CD4-positive, alpha-beta T cell (primary cell): ENCODE measurements at regions of chr2 and their contacts with region 1.

Region 1: GRCh38 chr2:156332534-156333273 is at the start of gene NR4A2:
- DNase-seq: peak; percentile 75 to 98 (median 86)
- ATAC-seq: peak; percentile 54
- H3K4me3 ChIP-seq: peak within 1 kb of the TSS; percentile 76
- H3K4me3 Mint-ChIP-seq: peak within 1 kb of the TSS; percentile 95
- H3K27ac ChIP-seq: peak within 1 kb of the TSS; percentile 93 to 98
- H3K27ac Mint-ChIP-seq: peak within 1 kb of the TSS; percentile 100
- H3K4me1 ChIP-seq: peaks cover 47% of the 10 kb centered on the region
- H3K4me1 Mint-ChIP-seq: peaks cover 57% of the 10 kb centered on the region
- H3K27me3 ChIP-seq: peaks cover 0 to 16% of the 10 kb centered on the region in 2 experiments
- H3K27me3 Mint-ChIP-seq: peaks cover 41% of the 10 kb centered on the region
- CTCF ChIP-seq: no peak
- total RNA-seq, gene NR4A2: 290 to 319 TPM

Region 2: GRCh38 chr2:156400706-156401678 is 68.3 kb after region 1 on chr2:
- CTCF ChIA-PET with region 1: interaction called, 18 read pairs
- POLR2A ChIA-PET with region 1: interaction called, 69 read pairs
- intact Hi-C with region 1: loop called in 1 of 2 experiments (anchors 1 kb)
- DNase-seq: peak; percentile 67 to 93 (median 77)
- ATAC-seq: peak; percentile 81
- H3K4me3 ChIP-seq: peak overlapping the region; percentile 88
- H3K4me3 Mint-ChIP-seq: peak overlapping the region; percentile 92
- H3K27ac ChIP-seq: peak overlapping the region; percentile 87 to 90
- H3K27ac Mint-ChIP-seq: peak overlapping the region; percentile 99
- H3K4me1 ChIP-seq: peaks cover 18% of the 10 kb centered on the region
- H3K4me1 Mint-ChIP-seq: peaks cover 28% of the 10 kb centered on the region
- H3K27me3 ChIP-seq: no peaks in the 10 kb centered on the region
- H3K27me3 Mint-ChIP-seq: peaks cover 11% of the 10 kb centered on the region
- CTCF ChIP-seq: no peak

Region 3: GRCh38 chr2:156435715-156436496 is 103.2 kb after region 1 on chr2 and contains the start of gene GPD2:
- CTCF ChIA-PET with region 1: interaction called, 7 read pairs
- POLR2A ChIA-PET with region 1: interaction called, 31 read pairs
- intact Hi-C with region 1: loop called in 1 of 2 experiments (anchors 5 kb)
- DNase-seq: peak; percentile 25 to 77 (median 46)
- ATAC-seq: peak; percentile 63
- H3K4me3 ChIP-seq: peak within 1 kb of the TSS; percentile 80
- H3K4me3 Mint-ChIP-seq: peak within 1 kb of the TSS; percentile 96
- H3K27ac ChIP-seq: peak within 1 kb of the TSS; percentile 33 to 69
- H3K27ac Mint-ChIP-seq: peak within 1 kb of the TSS; percentile 95
- H3K4me1 ChIP-seq: peaks cover 28% of the 10 kb centered on the region
- H3K4me1 Mint-ChIP-seq: peaks cover 33% of the 10 kb centered on the region
- H3K27me3 ChIP-seq: no peaks in the 10 kb centered on the region
- H3K27me3 Mint-ChIP-seq: no peaks in the 10 kb centered on the region
- CTCF ChIP-seq: no peak
- total RNA-seq, gene GPD2: 6.2 to 6.7 TPM

Region 4: DNA sequence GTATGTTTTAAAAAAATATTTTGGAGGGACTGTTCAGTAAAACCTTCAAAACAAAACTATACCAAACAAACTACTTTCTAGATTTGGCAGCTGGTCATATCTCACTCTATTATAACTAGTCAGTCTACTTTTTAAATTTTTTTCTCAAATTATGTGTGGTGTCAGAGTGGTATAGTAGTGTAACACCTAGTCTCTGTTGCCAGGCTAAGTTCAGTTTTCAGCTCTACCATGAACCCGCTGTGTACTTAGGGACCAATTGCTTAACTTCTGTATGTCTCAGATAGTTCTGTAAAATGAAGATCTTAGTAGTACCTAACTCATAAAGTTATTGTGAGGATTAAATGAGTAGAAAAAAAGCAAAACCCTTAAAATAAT is 157.7 kb after region 1 on chr2:
- CTCF ChIA-PET with region 1: no interaction called
- POLR2A ChIA-PET with region 1: interaction called, 4 read pairs
- intact Hi-C with region 1: loop called in 1 of 2 experiments (anchors 10 kb)
- DNase-seq: no peak
- ATAC-seq: no peak
- H3K4me3 ChIP-seq: no peak overlapping the region
- H3K4me3 Mint-ChIP-seq: no peak overlapping the region
- H3K27ac ChIP-seq: no peak overlapping the region
- H3K27ac Mint-ChIP-seq: no peak overlapping the region
- H3K4me1 ChIP-seq: no peaks in the 10 kb centered on the region
- H3K4me1 Mint-ChIP-seq: peaks cover 39% of the 10 kb centered on the region
- H3K27me3 ChIP-seq: no peaks in the 10 kb centered on the region
- H3K27me3 Mint-ChIP-seq: no peaks in the 10 kb centered on the region
- CTCF ChIP-seq: no peak

Region 5: GRCh38 chr2:156589381-156590079 is 256.8 kb after region 1 on chr2:
- CTCF ChIA-PET with region 1: interaction called, 7 read pairs
- POLR2A ChIA-PET with region 1: interaction called, 11 read pairs
- intact Hi-C with region 1: loop called (anchors 1 to 5 kb)
- DNase-seq: peak in 7 of 14 experiments; percentile 0 to 65 (median 19)
- ATAC-seq: peak; percentile 58
- H3K4me3 ChIP-seq: no peak overlapping the region
- H3K4me3 Mint-ChIP-seq: no peak overlapping the region
- H3K27ac ChIP-seq: no peak overlapping the region
- H3K27ac Mint-ChIP-seq: no peak overlapping the region
- H3K4me1 ChIP-seq: no peaks in the 10 kb centered on the region
- H3K4me1 Mint-ChIP-seq: peaks cover 5% of the 10 kb centered on the region
- H3K27me3 ChIP-seq: no peaks in the 10 kb centered on the region
- H3K27me3 Mint-ChIP-seq: no peaks in the 10 kb centered on the region
- CTCF ChIP-seq: peak; percentile 78

Region 6: GRCh38 chr2:156672556-156673332 is 340.0 kb after region 1 on chr2:
- CTCF ChIA-PET with region 1: no interaction called
- POLR2A ChIA-PET with region 1: no interaction called
- intact Hi-C with region 1: no loop called
- DNase-seq: no peak
- ATAC-seq: no peak
- H3K4me3 ChIP-seq: no peak overlapping the region
- H3K4me3 Mint-ChIP-seq: no peak overlapping the region
- H3K27ac ChIP-seq: no peak overlapping the region
- H3K27ac Mint-ChIP-seq: no peak overlapping the region
- H3K4me1 ChIP-seq: no peaks in the 10 kb centered on the region
- H3K4me1 Mint-ChIP-seq: no peaks in the 10 kb centered on the region
- H3K27me3 ChIP-seq: no peaks in the 10 kb centered on the region
- H3K27me3 Mint-ChIP-seq: peaks cover 5% of the 10 kb centered on the region
- CTCF ChIP-seq: no peak